ENCODE measurements at regions of chr9 and their contacts with region 1.

Region 1: DNA sequence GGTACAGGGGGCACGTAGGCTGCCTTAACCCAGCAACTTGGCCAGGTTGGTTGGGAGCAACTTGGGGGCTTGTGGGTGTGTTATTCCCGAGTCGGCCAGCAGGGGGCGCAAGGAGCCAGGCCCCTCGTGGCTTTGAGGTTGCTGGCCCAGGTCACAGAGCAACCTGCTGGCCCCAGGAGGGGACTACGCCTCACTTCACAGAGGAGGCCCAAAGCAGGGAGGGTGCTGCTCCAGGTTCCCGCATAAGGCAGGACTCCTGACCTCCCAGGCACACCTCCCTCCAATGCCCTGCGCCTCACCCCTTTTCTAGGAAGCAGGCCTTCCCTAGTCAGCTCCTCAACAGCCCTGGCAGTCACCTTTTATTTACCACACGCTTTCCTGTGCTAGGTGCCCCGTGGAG is 18.1 kb downstream of the KYAT1 start:
- DNase-seq: peak; percentile 62
- H3K4me3 ChIP-seq: no peak overlapping the region
- H3K27ac ChIP-seq: no peak overlapping the region
- H3K4me1 ChIP-seq: peaks cover 9% of the 10 kb centered on the region
- H3K27me3 ChIP-seq: no peaks in the 10 kb centered on the region

Region 2: GRCh38 chr9:128927731-128928411 is 64.2 kb after region 1 on chr9:
- in situ Hi-C with region 1: loop called (anchors 5 kb)
- DNase-seq: peak; percentile 47
- H3K4me3 ChIP-seq: no peak overlapping the region
- H3K27ac ChIP-seq: no peak overlapping the region
- H3K4me1 ChIP-seq: no peaks in the 10 kb centered on the region
- H3K27me3 ChIP-seq: no peaks in the 10 kb centered on the region